ENCODE measurements at regions of chr17 and their contacts with region 1.

Region 1: DNA sequence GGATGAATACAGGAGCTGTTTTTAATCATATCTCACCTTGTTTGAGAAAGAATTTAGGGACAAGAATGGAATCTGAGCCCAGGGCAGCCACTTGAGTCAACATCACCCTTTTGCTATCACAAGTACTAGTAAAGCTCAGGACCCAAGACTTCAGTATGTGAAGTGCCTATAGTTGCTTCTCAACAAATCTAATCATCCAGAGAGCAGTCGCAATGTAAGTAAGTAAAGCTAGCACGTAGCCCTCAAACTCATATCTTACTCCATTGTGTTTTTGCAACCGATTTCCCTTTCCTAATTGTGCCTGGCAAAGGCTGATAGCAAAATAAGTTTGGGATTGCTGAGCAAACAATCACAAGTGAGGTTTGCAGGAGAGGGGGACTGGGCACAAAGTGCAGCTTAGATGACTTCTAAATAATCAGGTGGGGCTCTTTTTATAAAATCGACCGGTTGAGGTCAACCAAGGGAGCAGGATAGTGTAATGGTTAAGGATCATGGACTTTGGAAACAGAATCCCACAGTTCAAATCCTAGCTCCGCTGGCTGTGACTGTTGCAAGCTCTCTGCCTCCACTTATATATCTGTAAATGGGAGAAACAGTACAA is 13.0 kb downstream of the TOB1 start:
- DNase-seq: no peak
- ATAC-seq: no peak
- H3K4me3 Mint-ChIP-seq: no peak overlapping the region
- H3K27ac Mint-ChIP-seq: no peak overlapping the region
- H3K4me1 Mint-ChIP-seq: peaks cover 15% of the 10 kb centered on the region
- H3K27me3 Mint-ChIP-seq: peaks cover 19% of the 10 kb centered on the region

Region 2: DNA sequence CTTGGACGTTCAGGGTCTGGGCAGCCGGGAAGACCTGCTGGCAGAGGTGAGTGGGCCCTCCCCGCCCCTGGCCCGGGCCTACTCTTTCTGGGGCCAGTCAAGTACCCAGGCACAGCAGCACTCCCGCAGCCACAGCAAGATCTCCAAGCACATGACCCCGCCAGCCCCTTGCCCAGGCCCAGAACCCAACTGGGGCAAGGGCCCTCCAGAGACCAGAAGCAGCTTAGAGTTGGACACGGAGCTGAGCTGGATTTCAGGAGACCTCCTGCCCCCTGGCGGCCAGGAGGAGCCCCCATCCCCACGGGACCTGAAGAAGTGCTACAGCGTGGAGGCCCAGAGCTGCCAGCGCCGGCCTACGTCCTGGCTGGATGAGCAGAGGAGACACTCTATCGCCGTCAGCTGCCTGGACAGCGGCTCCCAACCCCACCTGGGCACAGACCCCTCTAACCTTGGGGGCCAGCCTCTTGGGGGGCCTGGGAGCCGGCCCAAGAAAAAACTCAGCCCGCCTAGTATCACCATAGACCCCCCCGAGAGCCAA is 227.0 kb before region 1 on chr17:
- CTCF ChIA-PET with region 1: no interaction called
- POLR2A ChIA-PET with region 1: no interaction called
- DNase-seq: peak; percentile 72
- ATAC-seq: peak; percentile 75
- H3K4me3 Mint-ChIP-seq: no peak overlapping the region
- H3K27ac Mint-ChIP-seq: no peak overlapping the region
- H3K4me1 Mint-ChIP-seq: peaks cover 10% of the 10 kb centered on the region
- H3K27me3 Mint-ChIP-seq: peaks cover 29% of the 10 kb centered on the region

Region 3: GRCh38 chr17:50841949-50842354 is 11.2 kb before region 1 on chr17:
- CTCF ChIA-PET with region 1: interaction called, 32 read pairs
- POLR2A ChIA-PET with region 1: no interaction called
- DNase-seq: peak; percentile 70
- ATAC-seq: peak; percentile 70
- H3K4me3 Mint-ChIP-seq: no peak overlapping the region
- H3K27ac Mint-ChIP-seq: no peak overlapping the region
- H3K4me1 Mint-ChIP-seq: no peaks in the 10 kb centered on the region
- H3K27me3 Mint-ChIP-seq: no peaks in the 10 kb centered on the region

Region 4: DNA sequence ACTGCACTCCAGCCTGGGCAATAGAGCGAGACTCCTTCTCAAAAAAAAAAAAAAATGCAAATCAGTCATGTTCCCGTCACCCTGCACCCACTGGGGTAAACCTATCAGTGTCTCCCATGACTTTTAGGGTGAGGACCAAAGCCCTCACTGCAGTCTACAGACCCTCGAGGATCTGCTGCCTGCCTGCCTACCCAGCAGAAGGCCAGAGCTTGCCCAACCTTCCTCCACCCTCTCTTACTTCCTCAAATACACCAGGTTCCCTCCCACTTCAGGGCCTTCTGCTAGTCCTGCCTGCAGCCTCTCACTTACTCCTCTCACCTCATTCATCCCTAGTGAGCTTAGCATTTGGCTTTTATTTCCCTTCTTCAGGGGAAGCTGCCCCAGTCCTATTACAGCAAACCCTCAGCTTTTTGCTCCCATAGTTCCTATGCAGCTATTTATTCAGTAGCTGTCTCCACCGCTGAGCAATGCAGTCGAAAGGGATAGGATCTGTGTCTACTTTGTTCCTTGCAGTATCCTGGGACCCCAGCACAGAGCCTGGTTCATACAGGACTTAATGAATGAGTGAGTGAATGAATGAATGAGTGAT is 30.8 kb after region 1 on chr17:
- CTCF ChIA-PET with region 1: interaction called, 11 read pairs
- POLR2A ChIA-PET with region 1: no interaction called
- DNase-seq: no peak
- ATAC-seq: no peak
- H3K4me3 Mint-ChIP-seq: no peak overlapping the region
- H3K27ac Mint-ChIP-seq: no peak overlapping the region
- H3K4me1 Mint-ChIP-seq: peaks cover 22% of the 10 kb centered on the region
- H3K27me3 Mint-ChIP-seq: peaks cover 12% of the 10 kb centered on the region

Region 5: DNA sequence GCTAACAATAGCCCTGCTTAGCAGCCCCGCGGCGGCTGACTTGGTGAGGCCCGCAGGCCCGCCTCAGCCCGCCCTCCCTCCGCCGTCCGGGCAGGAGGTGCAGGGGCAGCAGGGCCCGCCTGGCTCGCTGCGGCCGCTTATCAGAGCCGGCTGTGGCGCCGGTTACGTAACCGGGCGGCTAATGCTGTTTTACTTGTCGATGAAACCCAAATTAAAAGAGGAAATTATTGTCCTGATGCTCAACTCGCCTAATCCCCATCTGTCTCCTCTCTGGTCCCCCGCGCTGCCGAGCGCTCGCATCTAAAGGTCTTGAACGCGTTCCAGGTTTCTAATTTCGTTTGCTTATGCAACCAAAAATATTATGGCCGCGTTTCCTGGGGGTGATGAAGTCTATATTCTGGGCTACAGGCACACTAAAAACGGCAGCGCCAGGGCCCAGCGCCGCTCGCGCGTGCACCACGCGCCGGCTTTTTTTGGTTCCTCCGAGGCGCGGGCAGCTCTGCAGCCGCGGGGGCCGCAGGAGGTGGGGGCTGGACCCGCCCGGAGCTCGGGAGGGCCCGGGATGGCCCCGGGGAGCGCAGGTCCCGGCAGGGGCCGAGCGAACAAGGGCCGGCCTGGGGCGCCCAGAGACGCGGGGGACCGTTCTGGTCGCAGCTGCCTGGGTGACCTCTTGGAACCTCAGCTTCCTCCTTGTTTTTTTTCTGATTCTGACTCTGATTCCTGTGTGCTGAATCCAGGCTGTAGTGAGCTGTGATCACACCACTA is 78.2 kb after region 1 on chr17:
- CTCF ChIA-PET with region 1: interaction called, 18 read pairs
- POLR2A ChIA-PET with region 1: no interaction called
- DNase-seq: peak; percentile 50
- ATAC-seq: peak; percentile 73
- H3K4me3 Mint-ChIP-seq: peak overlapping the region; percentile 68
- H3K27ac Mint-ChIP-seq: peak overlapping the region; percentile 67
- H3K4me1 Mint-ChIP-seq: peaks cover 33% of the 10 kb centered on the region
- H3K27me3 Mint-ChIP-seq: peaks cover 33% of the 10 kb centered on the region

Region 6: DNA sequence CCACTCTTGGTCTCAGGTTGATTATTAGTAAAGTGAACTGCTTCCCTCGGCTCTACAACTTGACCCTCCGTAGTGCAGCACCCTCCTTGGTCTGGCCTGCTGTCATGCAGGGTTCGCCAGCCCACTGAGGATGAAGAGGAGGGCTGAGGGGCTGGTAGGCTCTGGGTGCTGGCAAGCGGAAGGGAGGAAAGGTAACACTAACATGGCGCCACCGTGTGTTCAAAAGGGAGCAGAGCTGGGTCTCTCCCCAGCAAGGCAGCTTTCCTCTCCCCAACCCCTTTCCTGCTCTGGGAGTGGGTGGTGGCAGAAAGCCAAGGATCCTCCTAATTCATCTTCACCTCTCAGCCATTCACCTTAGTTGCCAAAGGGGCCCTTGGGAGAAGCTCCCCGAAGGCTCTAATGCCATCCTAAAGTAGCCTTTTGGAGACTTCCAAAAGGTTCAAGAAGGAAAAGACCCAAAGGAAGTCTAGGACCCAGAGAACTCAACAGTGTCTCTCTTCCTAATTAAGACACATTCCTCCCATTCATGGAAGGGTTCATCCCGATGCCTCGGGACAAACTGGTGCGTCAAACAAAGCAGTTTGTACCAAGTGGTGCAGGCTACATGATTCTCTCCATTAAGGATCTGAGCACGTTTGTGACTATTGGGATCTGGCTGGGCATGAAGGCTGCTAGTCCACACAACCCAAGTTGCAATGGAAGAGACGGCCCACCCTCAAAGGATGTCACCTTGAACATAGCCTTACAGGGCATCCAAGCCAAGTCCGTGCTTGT is 103.8 kb after region 1 on chr17:
- CTCF ChIA-PET with region 1: interaction called, 351 read pairs
- POLR2A ChIA-PET with region 1: interaction called, 11 read pairs
- DNase-seq: peak; percentile 79
- ATAC-seq: peak; percentile 95
- H3K4me3 Mint-ChIP-seq: no peak overlapping the region
- H3K27ac Mint-ChIP-seq: no peak overlapping the region
- H3K4me1 Mint-ChIP-seq: peaks cover 23% of the 10 kb centered on the region
- H3K27me3 Mint-ChIP-seq: no peaks in the 10 kb centered on the region

Region 7: GRCh38 chr17:51000835-51001638 is 147.9 kb after region 1 on chr17:
- CTCF ChIA-PET with region 1: interaction called, 13 read pairs
- POLR2A ChIA-PET with region 1: no interaction called
- DNase-seq: peak; percentile 47
- ATAC-seq: peak; percentile 71
- H3K4me3 Mint-ChIP-seq: no peak overlapping the region
- H3K27ac Mint-ChIP-seq: no peak overlapping the region
- H3K4me1 Mint-ChIP-seq: no peaks in the 10 kb centered on the region
- H3K27me3 Mint-ChIP-seq: no peaks in the 10 kb centered on the region